ENCODE measurements at regions of chr2 and their contacts with region 1.

Region 1: GRCh38 chr2:161586517-161587167 is 37.6 kb upstream of the SLC4A10 start:
- DNase-seq: peak in 3 of 14 experiments; percentile 28 to 47 (median 35)
- ATAC-seq: no peak
- H3K4me3 ChIP-seq: no peak overlapping the region
- H3K4me3 Mint-ChIP-seq: no peak overlapping the region
- H3K27ac ChIP-seq: no peak overlapping the region
- H3K27ac Mint-ChIP-seq: no peak overlapping the region
- H3K4me1 ChIP-seq: no peaks in the 10 kb centered on the region
- H3K4me1 Mint-ChIP-seq: no peaks in the 10 kb centered on the region
- H3K27me3 ChIP-seq: no peaks in the 10 kb centered on the region
- H3K27me3 Mint-ChIP-seq: peaks cover 8% of the 10 kb centered on the region
- CTCF ChIP-seq: peak; percentile 71

Region 2: DNA sequence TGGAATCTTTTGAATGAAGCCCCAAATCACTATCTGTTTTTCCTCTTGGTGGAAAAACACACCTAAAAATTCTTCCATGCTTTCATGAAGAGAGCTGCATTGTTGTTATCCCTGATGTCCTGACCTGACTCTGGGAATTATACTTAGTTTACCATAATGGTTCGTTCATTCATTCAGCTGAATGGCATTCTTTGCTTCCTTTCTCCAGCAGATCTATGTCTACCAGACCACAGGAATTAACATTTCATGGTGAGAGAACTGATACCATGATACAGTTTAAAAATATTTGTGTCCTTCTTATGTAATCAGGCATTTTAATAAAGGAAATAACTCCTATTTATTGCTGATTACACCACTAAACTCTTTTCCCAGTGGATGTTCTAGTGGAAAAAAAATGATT is 26.5 kb after region 1 on chr2:
- CTCF ChIA-PET with region 1: no interaction called
- POLR2A ChIA-PET with region 1: no interaction called
- intact Hi-C with region 1: no loop called
- DNase-seq: no peak
- ATAC-seq: no peak
- H3K4me3 ChIP-seq: no peak overlapping the region
- H3K4me3 Mint-ChIP-seq: no peak overlapping the region
- H3K27ac ChIP-seq: no peak overlapping the region
- H3K27ac Mint-ChIP-seq: no peak overlapping the region
- H3K4me1 ChIP-seq: no peaks in the 10 kb centered on the region
- H3K4me1 Mint-ChIP-seq: no peaks in the 10 kb centered on the region
- H3K27me3 ChIP-seq: peaks cover 5 to 13% of the 10 kb centered on the region in 2 experiments
- H3K27me3 Mint-ChIP-seq: peaks cover 39% of the 10 kb centered on the region
- CTCF ChIP-seq: no peak

Region 3: DNA sequence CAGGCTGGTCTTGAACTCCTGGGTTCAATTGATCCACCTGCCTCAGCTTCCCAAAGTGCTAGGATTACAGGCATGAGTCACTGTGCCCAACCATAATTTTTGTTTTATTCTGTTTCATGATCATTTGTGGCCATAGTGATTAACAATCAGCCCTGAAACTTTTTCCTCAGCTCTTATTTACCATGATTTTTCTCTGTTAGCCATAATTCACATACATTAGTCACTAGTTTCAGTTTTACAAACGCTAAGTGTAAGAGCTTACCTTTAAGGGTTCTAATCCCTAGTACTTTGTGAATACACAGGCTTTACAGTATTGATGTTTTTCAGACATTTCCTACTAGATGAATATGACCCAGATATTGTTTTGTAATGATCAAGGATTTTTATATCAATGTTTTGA is 271.3 kb after region 1 on chr2:
- CTCF ChIA-PET with region 1: no interaction called
- POLR2A ChIA-PET with region 1: no interaction called
- intact Hi-C with region 1: no loop called
- DNase-seq: no peak
- ATAC-seq: no peak
- H3K4me3 ChIP-seq: no peak overlapping the region
- H3K4me3 Mint-ChIP-seq: no peak overlapping the region
- H3K27ac ChIP-seq: no peak overlapping the region
- H3K27ac Mint-ChIP-seq: no peak overlapping the region
- H3K4me1 ChIP-seq: no peaks in the 10 kb centered on the region
- H3K4me1 Mint-ChIP-seq: no peaks in the 10 kb centered on the region
- H3K27me3 ChIP-seq: no peaks in the 10 kb centered on the region
- H3K27me3 Mint-ChIP-seq: no peaks in the 10 kb centered on the region
- CTCF ChIP-seq: no peak

Region 4: DNA sequence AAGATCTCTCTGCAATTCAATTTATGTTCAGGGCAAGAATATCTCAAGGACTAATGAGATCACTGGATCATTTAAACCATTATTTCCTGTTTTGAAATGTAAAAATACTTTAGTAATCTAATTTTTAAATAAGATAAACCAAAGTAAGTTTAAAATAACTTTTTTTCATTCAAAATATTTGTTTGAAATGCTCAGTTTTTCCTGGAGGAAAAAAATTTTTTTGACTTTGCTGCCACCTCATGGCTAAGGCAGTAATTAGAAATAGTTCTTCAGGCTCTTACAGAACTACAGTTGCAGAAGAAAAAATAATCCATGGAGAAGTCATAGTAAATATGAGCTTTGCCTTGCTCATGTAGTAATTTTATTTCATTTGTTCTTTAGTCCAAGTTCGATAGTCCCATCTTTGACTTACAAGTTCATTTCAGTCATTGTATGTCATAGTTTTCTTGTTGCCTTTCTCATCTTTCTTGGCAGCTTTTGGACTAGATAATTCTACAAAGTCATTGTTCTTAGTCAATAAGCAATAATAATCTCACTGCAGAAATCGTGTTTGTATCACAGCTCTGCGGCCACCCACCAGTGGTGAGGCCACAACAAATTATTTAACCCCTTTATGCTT is 360.0 kb after region 1 on chr2:
- CTCF ChIA-PET with region 1: no interaction called
- POLR2A ChIA-PET with region 1: no interaction called
- intact Hi-C with region 1: loop called (anchors 1 to 5 kb)
- DNase-seq: peak in 4 of 14 experiments; percentile 12 to 48 (median 41)
- ATAC-seq: no peak
- H3K4me3 ChIP-seq: no peak overlapping the region
- H3K4me3 Mint-ChIP-seq: no peak overlapping the region
- H3K27ac ChIP-seq: no peak overlapping the region
- H3K27ac Mint-ChIP-seq: no peak overlapping the region
- H3K4me1 ChIP-seq: no peaks in the 10 kb centered on the region
- H3K4me1 Mint-ChIP-seq: no peaks in the 10 kb centered on the region
- H3K27me3 ChIP-seq: no peaks in the 10 kb centered on the region
- H3K27me3 Mint-ChIP-seq: no peaks in the 10 kb centered on the region
- CTCF ChIP-seq: peak; percentile 78

Region 5: GRCh38 chr2:162007447-162008040 is 420.9 kb after region 1 on chr2:
- CTCF ChIA-PET with region 1: no interaction called
- POLR2A ChIA-PET with region 1: no interaction called
- intact Hi-C with region 1: loop called in 1 of 2 experiments (anchors 10 kb)
- DNase-seq: peak in 3 of 14 experiments; percentile 55 to 61 (median 55)
- ATAC-seq: no peak
- H3K4me3 ChIP-seq: no peak overlapping the region
- H3K4me3 Mint-ChIP-seq: no peak overlapping the region
- H3K27ac ChIP-seq: no peak overlapping the region
- H3K27ac Mint-ChIP-seq: peak overlapping the region; percentile 7
- H3K4me1 ChIP-seq: peaks cover 15% of the 10 kb centered on the region
- H3K4me1 Mint-ChIP-seq: peaks cover 53% of the 10 kb centered on the region
- H3K27me3 ChIP-seq: no peaks in the 10 kb centered on the region
- H3K27me3 Mint-ChIP-seq: no peaks in the 10 kb centered on the region
- CTCF ChIP-seq: peak; percentile 89